ENCODE measurements at regions of chr22 and their contacts with region 1.

Region 1: DNA sequence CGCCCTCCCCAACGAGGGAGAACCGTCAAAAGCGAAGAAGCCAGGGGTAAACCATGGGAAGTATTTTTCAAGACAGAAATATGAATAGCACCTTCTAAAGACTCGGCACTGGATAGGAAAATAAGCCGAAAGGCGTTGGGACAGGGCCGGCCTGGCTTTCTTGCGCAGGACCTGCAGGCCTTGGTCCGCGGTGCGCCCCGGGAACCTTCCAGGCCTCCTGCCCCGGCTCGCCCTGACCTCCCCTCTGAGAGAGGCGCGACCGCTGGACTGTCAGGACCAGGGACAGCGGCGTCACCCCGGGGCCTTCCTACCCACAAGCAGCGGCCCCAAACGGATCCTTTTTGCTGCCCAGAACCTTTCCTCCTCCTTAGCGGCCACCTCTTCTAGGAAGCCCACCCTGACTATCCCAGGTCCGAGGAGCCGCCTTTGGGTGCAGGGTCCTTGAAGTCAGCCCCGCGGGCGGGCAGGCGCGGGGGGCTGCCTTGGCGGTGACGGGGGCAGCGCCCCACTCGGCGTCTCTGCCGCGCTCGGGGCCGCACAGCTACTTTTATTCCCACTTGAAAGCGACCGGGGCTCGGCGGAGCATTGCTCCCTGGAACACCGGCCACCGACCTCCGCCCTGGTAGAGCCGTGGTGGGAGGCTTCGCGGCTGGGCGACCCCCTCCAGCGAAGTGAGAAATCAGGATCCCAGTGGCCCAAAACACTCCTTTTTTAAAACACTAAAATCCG is 650 bp upstream of the MAPK11 start:
- DNase-seq: peak; percentile 49 to 82 (median 72)
- ATAC-seq: peak; percentile 64
- H3K4me3 ChIP-seq: peak overlapping the region; percentile 45 to 65
- H3K4me3 Mint-ChIP-seq: peak overlapping the region; percentile 69
- H3K27ac ChIP-seq: no peak overlapping the region
- H3K27ac Mint-ChIP-seq: no peak overlapping the region
- H3K4me1 ChIP-seq: peaks cover 25% of the 10 kb centered on the region
- H3K4me1 Mint-ChIP-seq: peaks cover 18% of the 10 kb centered on the region
- H3K27me3 ChIP-seq: peaks cover 0 to 2% of the 10 kb centered on the region in 2 experiments
- H3K27me3 Mint-ChIP-seq: peaks cover 3% of the 10 kb centered on the region
- CTCF ChIP-seq: no peak

Region 2: GRCh38 chr22:50215297-50216054 is 55.4 kb before region 1 on chr22:
- CTCF ChIA-PET with region 1: no interaction called
- POLR2A ChIA-PET with region 1: no interaction called
- intact Hi-C with region 1: loop called in 1 of 2 experiments (anchors 2 kb)
- DNase-seq: peak in 1 of 9 experiments; percentile 19
- ATAC-seq: no peak
- H3K4me3 ChIP-seq: no peak overlapping the region
- H3K4me3 Mint-ChIP-seq: no peak overlapping the region
- H3K27ac ChIP-seq: no peak overlapping the region
- H3K27ac Mint-ChIP-seq: peak overlapping the region; percentile 41
- H3K4me1 ChIP-seq: no peaks in the 10 kb centered on the region
- H3K4me1 Mint-ChIP-seq: peaks cover 22% of the 10 kb centered on the region
- H3K27me3 ChIP-seq: no peaks in the 10 kb centered on the region
- H3K27me3 Mint-ChIP-seq: no peaks in the 10 kb centered on the region
- CTCF ChIP-seq: no peak

Measured in CD8-positive, alpha-beta T cell (primary cell).